Motor neuron (in vitro differentiated cells): ENCODE measurements at regions of chr10 and their contacts with region 1.

Region 1: GRCh38 chr10:118447478-118448270 is 105.5 kb upstream of the FAM204A start:
- ATAC-seq: peak in 4 of 8 experiments; percentile 14 to 100 (median 92)
- H3K4me3 ChIP-seq: no peak overlapping the region
- H3K27ac ChIP-seq: no peak overlapping the region
- H3K4me1 ChIP-seq: peaks cover 0 to 4% of the 10 kb centered on the region in 2 donors

Region 2: GRCh38 chr10:117496616-117497028 is 951.1 kb before region 1 on chr10:
- in situ Hi-C with region 1: loop called in 4 of 9 experiments (anchors 25 kb)
- ATAC-seq: peak; percentile 74 to 98 (median 82)
- H3K4me3 ChIP-seq: no peak overlapping the region
- H3K27ac ChIP-seq: no peak overlapping the region
- H3K4me1 ChIP-seq: peaks cover 2 to 3% of the 10 kb centered on the region in 2 donors

Region 3: DNA sequence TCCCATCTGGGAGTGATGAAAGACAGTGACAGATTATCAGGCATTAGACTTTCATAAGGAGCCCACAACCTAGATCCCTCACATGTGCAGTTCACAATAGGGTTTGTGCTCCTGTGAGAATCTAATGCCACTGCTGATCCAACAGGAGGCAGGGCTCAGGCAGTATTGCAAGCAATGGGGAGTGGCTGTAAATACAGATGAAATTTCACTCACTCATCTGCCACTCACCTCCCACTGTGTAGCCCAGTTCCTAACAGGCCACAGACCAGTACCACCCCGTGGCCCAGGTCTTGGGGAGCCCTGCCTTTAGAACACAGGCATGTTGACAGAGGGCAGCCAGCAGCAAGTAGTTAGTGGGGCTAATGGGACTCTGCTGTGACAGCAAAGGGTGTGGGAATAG is 444.6 kb after region 1 on chr10:
- in situ Hi-C with region 1: no loop called
- ATAC-seq: peak in 2 of 8 experiments; percentile 59 to 79
- H3K4me3 ChIP-seq: no peak overlapping the region
- H3K27ac ChIP-seq: no peak overlapping the region
- H3K4me1 ChIP-seq: peaks cover 0 to 2% of the 10 kb centered on the region in 2 donors